ENCODE measurements at regions of chr10 and their contacts with region 1.

Region 1: DNA sequence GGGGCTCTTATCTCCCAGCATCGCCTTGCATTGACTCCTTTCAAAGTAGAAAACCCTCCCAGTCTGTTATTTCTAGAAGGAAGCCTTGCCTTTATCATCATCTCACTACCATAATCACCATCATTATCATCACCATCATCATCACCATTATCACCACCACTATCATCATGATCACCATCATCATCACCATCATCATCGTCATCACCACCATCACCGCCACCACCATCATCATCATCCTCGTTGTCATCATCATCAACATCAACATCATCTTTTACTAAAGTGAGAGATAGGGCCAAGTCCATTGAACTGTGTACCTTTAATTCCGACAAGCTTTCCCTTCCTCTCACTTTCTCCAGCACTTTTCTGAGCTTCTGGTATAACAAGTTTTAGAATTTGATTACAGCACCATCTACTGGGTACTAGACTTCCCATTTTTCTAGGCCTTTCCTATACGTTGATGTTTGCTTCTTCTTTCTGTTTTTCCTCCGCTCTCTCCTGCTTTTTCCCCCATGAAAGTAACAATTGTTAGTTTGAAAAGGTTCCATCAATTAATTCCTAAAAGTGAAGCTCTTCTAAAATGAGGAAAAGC is 226.4 kb downstream of the BUB3 start:
- DNase-seq: peak; percentile 12 to 35
- ATAC-seq: peak; percentile 52 to 76; a peak in 4 of 6 replicates
- H3K4me3 ChIP-seq: no peak overlapping the region
- H3K27ac ChIP-seq: no peak overlapping the region
- H3K4me1 ChIP-seq: peaks cover 10% of the 10 kb centered on the region
- CTCF ChIP-seq: peak; percentile 52
- EP300 ChIP-seq: no peak
- POLR2A ChIP-seq: no peak
- RAD21 ChIP-seq: peak; percentile 61 to 65

Region 2: GRCh38 chr10:123132576-123133477 is 247.8 kb before region 1 on chr10:
- CTCF ChIA-PET with region 1: interaction called, 82 read pairs
- POLR2A ChIA-PET with region 1: no interaction called
- DNase-seq: peak; percentile 88 to 90
- ATAC-seq: peak; percentile 72 to 88
- H3K4me3 ChIP-seq: peak overlapping the region; percentile 38
- H3K27ac ChIP-seq: no peak overlapping the region
- H3K4me1 ChIP-seq: peaks cover 25% of the 10 kb centered on the region; the same call in 2 of the 3 replicates
- CTCF ChIP-seq: peak; percentile 88
- EP300 ChIP-seq: no peak
- POLR2A ChIP-seq: no peak
- RAD21 ChIP-seq: peak; percentile 90 to 93

Region 3: GRCh38 chr10:123139521-123140163 is 240.9 kb before region 1 on chr10:
- CTCF ChIA-PET with region 1: interaction called, 82 read pairs
- POLR2A ChIA-PET with region 1: interaction called, 5 read pairs
- DNase-seq: peak; percentile 22 to 49
- ATAC-seq: peak; percentile 35 to 60; a peak in 5 of 6 replicates
- H3K4me3 ChIP-seq: peak overlapping the region; percentile 42
- H3K27ac ChIP-seq: 0 out of 6 replicates have a peak overlapping the region, but pooled peaks of 1 of the 2 experiments have one; percentile 6
- H3K4me1 ChIP-seq: peaks cover 28% of the 10 kb centered on the region; the same call in 2 of the 3 replicates
- CTCF ChIP-seq: no peak
- EP300 ChIP-seq: no peak
- POLR2A ChIP-seq: no peak
- RAD21 ChIP-seq: no peak

Region 4: GRCh38 chr10:123147635-123148413 is 232.8 kb before region 1 on chr10 and contains the start of gene HMX2:
- CTCF ChIA-PET with region 1: interaction called, 41 read pairs
- POLR2A ChIA-PET with region 1: no interaction called
- DNase-seq: no peak
- ATAC-seq: peak; percentile 62 to 84; a peak in 4 of 6 replicates
- H3K4me3 ChIP-seq: peak within 1 kb of the TSS; percentile 46
- H3K27ac ChIP-seq: peak within 1 kb of the TSS in 1 of 2 experiments; percentile 78; a peak in 3 of 6 replicates
- H3K4me1 ChIP-seq: peaks cover 4% of the 10 kb centered on the region; the same call in 2 of the 3 replicates
- CTCF ChIP-seq: no peak
- EP300 ChIP-seq: no peak
- POLR2A ChIP-seq: no peak
- RAD21 ChIP-seq: no peak
- polyA plus RNA-seq, gene HMX2: not detected in 2 replicates

Region 5: GRCh38 chr10:123357421-123357930 is 23.1 kb before region 1 on chr10:
- CTCF ChIA-PET with region 1: interaction called, 12 read pairs
- POLR2A ChIA-PET with region 1: no interaction called
- DNase-seq: no peak
- ATAC-seq: no peak
- H3K4me3 ChIP-seq: no peak overlapping the region
- H3K27ac ChIP-seq: no peak overlapping the region
- H3K4me1 ChIP-seq: no peaks in the 10 kb centered on the region
- CTCF ChIP-seq: no peak
- EP300 ChIP-seq: no peak
- POLR2A ChIP-seq: no peak
- RAD21 ChIP-seq: no peak